B cell (primary cell): ENCODE measurements at regions of chr15 and their contacts with region 1.

Region 1: GRCh38 chr15:40857601-40858341 is 13.9 kb downstream of the SPINT1 start:
- DNase-seq: peak; percentile 82
- ATAC-seq: peak; percentile 95
- H3K4me3 ChIP-seq: no peak overlapping the region
- H3K4me3 Mint-ChIP-seq: no peak overlapping the region
- H3K27ac ChIP-seq: no peak overlapping the region
- H3K27ac Mint-ChIP-seq: no peak overlapping the region
- H3K4me1 ChIP-seq: peaks cover 0 to 10% of the 10 kb centered on the region in 2 donors
- H3K4me1 Mint-ChIP-seq: peaks cover 12% of the 10 kb centered on the region
- H3K27me3 ChIP-seq: no peaks in the 10 kb centered on the region
- H3K27me3 Mint-ChIP-seq: no peaks in the 10 kb centered on the region
- CTCF ChIP-seq: peak; percentile 93

Region 2: GRCh38 chr15:40847205-40847961 is 10.4 kb before region 1 on chr15:
- CTCF ChIA-PET with region 1: interaction called, 52 read pairs
- POLR2A ChIA-PET with region 1: no interaction called
- intact Hi-C with region 1: no loop called
- DNase-seq: peak; percentile 61
- ATAC-seq: peak; percentile 48
- H3K4me3 ChIP-seq: no peak overlapping the region
- H3K4me3 Mint-ChIP-seq: peak overlapping the region; percentile 21
- H3K27ac ChIP-seq: peak overlapping the region; percentile 51 to 71
- H3K27ac Mint-ChIP-seq: peak overlapping the region; percentile 83
- H3K4me1 ChIP-seq: peaks cover 34 to 38% of the 10 kb centered on the region in 2 donors
- H3K4me1 Mint-ChIP-seq: peaks cover 37% of the 10 kb centered on the region
- H3K27me3 ChIP-seq: no peaks in the 10 kb centered on the region
- H3K27me3 Mint-ChIP-seq: no peaks in the 10 kb centered on the region
- CTCF ChIP-seq: no peak

Region 3: DNA sequence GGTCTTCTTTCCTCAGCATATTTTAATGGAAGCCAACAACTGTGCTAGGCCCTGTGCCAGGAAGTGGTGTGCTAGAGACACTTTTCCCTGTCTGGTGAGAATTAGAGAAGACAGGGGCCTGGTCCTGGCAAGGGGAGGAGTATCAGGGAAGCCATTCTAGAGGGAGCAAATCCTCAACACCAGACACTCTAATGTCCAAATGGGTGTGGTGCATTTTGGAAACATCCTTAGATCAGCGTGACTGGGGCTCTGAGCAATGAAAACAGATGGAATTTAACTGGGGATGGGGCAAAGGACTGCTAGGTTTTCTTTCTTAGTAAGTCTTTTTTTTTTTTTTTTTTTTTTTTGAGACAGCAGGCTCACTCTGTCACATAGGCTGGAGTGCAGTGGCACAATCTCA is 28.8 kb after region 1 on chr15:
- CTCF ChIA-PET with region 1: interaction called, 189 read pairs
- POLR2A ChIA-PET with region 1: interaction called, 9 read pairs
- intact Hi-C with region 1: no loop called
- DNase-seq: no peak
- ATAC-seq: no peak
- H3K4me3 ChIP-seq: no peak overlapping the region
- H3K4me3 Mint-ChIP-seq: no peak overlapping the region
- H3K27ac ChIP-seq: no peak overlapping the region
- H3K27ac Mint-ChIP-seq: no peak overlapping the region
- H3K4me1 ChIP-seq: no peaks in the 10 kb centered on the region
- H3K4me1 Mint-ChIP-seq: peaks cover under 1% of the 10 kb centered on the region
- H3K27me3 ChIP-seq: no peaks in the 10 kb centered on the region
- H3K27me3 Mint-ChIP-seq: peaks cover 3% of the 10 kb centered on the region
- CTCF ChIP-seq: no peak

Region 4: GRCh38 chr15:41022487-41023090 is 164.8 kb after region 1 on chr15:
- CTCF ChIA-PET with region 1: interaction called, 38 read pairs
- POLR2A ChIA-PET with region 1: no interaction called
- intact Hi-C with region 1: loop called (anchors 5 kb)
- DNase-seq: peak; percentile 64
- ATAC-seq: peak; percentile 63
- H3K4me3 ChIP-seq: no peak overlapping the region
- H3K4me3 Mint-ChIP-seq: no peak overlapping the region
- H3K27ac ChIP-seq: no peak overlapping the region
- H3K27ac Mint-ChIP-seq: no peak overlapping the region
- H3K4me1 ChIP-seq: no peaks in the 10 kb centered on the region
- H3K4me1 Mint-ChIP-seq: no peaks in the 10 kb centered on the region
- H3K27me3 ChIP-seq: no peaks in the 10 kb centered on the region
- H3K27me3 Mint-ChIP-seq: no peaks in the 10 kb centered on the region
- CTCF ChIP-seq: peak; percentile 74

Region 5: GRCh38 chr15:41180206-41180789 is 322.5 kb after region 1 on chr15:
- CTCF ChIA-PET with region 1: interaction called, 103 read pairs
- POLR2A ChIA-PET with region 1: no interaction called
- intact Hi-C with region 1: loop called (anchors 1 kb)
- DNase-seq: no peak
- ATAC-seq: no peak
- H3K4me3 ChIP-seq: no peak overlapping the region
- H3K4me3 Mint-ChIP-seq: no peak overlapping the region
- H3K27ac ChIP-seq: no peak overlapping the region
- H3K27ac Mint-ChIP-seq: no peak overlapping the region
- H3K4me1 ChIP-seq: no peaks in the 10 kb centered on the region
- H3K4me1 Mint-ChIP-seq: peaks cover 3% of the 10 kb centered on the region
- H3K27me3 ChIP-seq: no peaks in the 10 kb centered on the region
- H3K27me3 Mint-ChIP-seq: peaks cover 3% of the 10 kb centered on the region
- CTCF ChIP-seq: no peak